HEK293 (cell line): ENCODE measurements at regions of chr14 and their contacts with region 1.

Region 1: GRCh38 chr14:90758028-90758889 is 58.0 kb downstream of the TTC7B start:
- H3K4me3 ChIP-seq: peak overlapping the region; percentile 35
- H3K27ac ChIP-seq: peak overlapping the region; percentile 32; the same call in 1 of the 2 replicates
- H3K4me1 ChIP-seq: peaks cover 3% of the 10 kb centered on the region; the same call in 1 of the 2 replicates
- CTCF ChIP-seq: peak; percentile 92

Region 2: GRCh38 chr14:90301668-90302090 is 456.6 kb before region 1 on chr14:
- CTCF ChIA-PET with region 1: interaction called, 13 read pairs
- POLR2A ChIA-PET with region 1: no interaction called
- H3K4me3 ChIP-seq: no peak overlapping the region
- H3K27ac ChIP-seq: no peak overlapping the region
- H3K4me1 ChIP-seq: no peaks in the 10 kb centered on the region
- CTCF ChIP-seq: no peak

Region 3: GRCh38 chr14:90355540-90356518 is 402.4 kb before region 1 on chr14:
- CTCF ChIA-PET with region 1: no interaction called
- POLR2A ChIA-PET with region 1: no interaction called
- H3K4me3 ChIP-seq: no peak overlapping the region
- H3K27ac ChIP-seq: no peak overlapping the region
- H3K4me1 ChIP-seq: no peaks in the 10 kb centered on the region
- CTCF ChIP-seq: no peak

Region 4: DNA sequence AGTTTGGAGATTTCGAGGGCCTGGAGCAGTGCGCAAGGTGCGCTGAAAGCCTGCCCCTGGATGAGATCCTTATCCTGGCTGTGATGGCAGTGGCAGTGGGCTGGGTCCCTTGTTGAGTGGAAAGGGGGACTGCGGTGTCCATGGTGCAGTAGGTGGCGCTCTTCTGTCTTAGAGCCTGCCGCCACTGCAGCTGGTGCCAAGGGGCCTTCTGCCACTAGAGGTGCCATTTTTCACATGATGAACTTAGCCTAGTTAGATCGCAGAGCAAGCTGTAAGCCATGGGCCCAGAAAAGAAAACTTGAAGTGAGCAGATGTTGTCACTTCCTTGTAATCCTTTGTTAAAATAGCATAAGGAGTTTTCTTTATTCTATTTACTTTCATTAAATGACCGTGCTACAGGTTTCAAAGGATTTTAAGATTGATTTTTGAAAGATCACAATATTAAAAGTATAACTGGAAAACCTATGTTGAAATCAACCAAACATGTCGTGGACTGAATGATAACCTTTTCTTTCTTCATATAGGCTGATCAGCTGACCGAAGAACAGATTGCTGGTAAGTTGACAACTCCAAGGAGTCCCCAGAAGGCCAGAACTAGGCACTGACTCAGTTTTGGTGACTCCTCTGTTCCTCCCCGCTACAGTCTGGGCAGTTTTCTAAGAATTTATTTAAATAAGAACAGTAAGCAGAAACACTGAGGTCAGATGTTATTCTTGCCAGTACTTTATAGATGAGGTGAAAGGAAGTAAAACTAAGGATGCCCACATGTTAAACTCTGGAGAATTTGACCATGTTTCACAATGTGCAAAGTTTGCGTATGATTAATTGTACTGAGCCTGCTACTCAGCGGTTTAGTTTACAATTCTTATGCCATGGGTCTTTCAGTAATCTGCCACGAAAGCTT is 358.5 kb before region 1 on chr14:
- CTCF ChIA-PET with region 1: interaction called, 20 read pairs
- POLR2A ChIA-PET with region 1: interaction called, 6 read pairs
- H3K4me3 ChIP-seq: no peak overlapping the region; the same call in 1 of the 2 replicates
- H3K27ac ChIP-seq: no peak overlapping the region
- H3K4me1 ChIP-seq: peaks cover 5% of the 10 kb centered on the region; the same call in 1 of the 2 replicates
- CTCF ChIP-seq: peak; percentile 99

Region 5: GRCh38 chr14:90739318-90740068 is 18.8 kb before region 1 on chr14:
- CTCF ChIA-PET with region 1: interaction called, 11 read pairs
- POLR2A ChIA-PET with region 1: no interaction called
- H3K4me3 ChIP-seq: no peak overlapping the region
- H3K27ac ChIP-seq: no peak overlapping the region
- H3K4me1 ChIP-seq: no peaks in the 10 kb centered on the region
- CTCF ChIP-seq: no peak

Region 6: GRCh38 chr14:90773705-90774104 is 15.4 kb after region 1 on chr14:
- CTCF ChIA-PET with region 1: interaction called, 27 read pairs
- POLR2A ChIA-PET with region 1: no interaction called
- H3K4me3 ChIP-seq: no peak overlapping the region
- H3K27ac ChIP-seq: no peak overlapping the region
- H3K4me1 ChIP-seq: no peaks in the 10 kb centered on the region
- CTCF ChIP-seq: no peak

Region 7: DNA sequence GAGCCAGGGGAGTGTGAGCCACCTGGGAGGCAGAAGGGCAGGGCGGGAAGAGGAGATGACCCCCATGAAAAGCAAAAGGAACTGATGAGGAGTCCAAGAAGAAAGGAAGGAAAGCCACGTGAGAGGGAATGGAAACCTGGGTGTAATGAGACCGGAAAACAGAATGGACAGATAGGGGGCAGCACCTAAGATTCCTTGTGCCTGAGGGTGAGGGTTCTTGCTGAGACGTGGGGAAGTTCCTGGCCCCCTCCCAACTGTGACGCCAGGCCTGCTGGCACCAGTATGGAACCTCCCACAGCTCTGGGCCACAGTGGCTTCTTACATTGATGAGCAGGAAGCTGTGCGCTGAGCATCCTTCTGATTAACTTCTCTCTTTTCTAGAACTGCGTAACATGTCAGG is 27.2 kb after region 1 on chr14:
- CTCF ChIA-PET with region 1: interaction called, 25 read pairs
- POLR2A ChIA-PET with region 1: no interaction called
- H3K4me3 ChIP-seq: no peak overlapping the region
- H3K27ac ChIP-seq: no peak overlapping the region
- H3K4me1 ChIP-seq: no peaks in the 10 kb centered on the region
- CTCF ChIP-seq: no peak

Region 8: GRCh38 chr14:90979515-90980239 is 221.4 kb after region 1 on chr14:
- CTCF ChIA-PET with region 1: no interaction called
- POLR2A ChIA-PET with region 1: no interaction called
- H3K4me3 ChIP-seq: no peak overlapping the region
- H3K27ac ChIP-seq: no peak overlapping the region
- H3K4me1 ChIP-seq: no peaks in the 10 kb centered on the region
- CTCF ChIP-seq: no peak